Activated CD8-positive, alpha-beta memory T cell treated with anti-CD3 and anti-CD28 coated beads, Interleukin-2, amount 10 ng/mL, durations not matched to agents 7 days and 5 days (primary cell): ENCODE measurements at regions of chr6 and their contacts with region 1.

Region 1: GRCh38 chr6:33744001-33744848 is 2.5 kb downstream of the IP6K3 start:
- DNase-seq: peak; percentile 80
- ATAC-seq: peak; percentile 78
- H3K4me3 Mint-ChIP-seq: no peak overlapping the region
- H3K27ac Mint-ChIP-seq: no peak overlapping the region
- H3K4me1 Mint-ChIP-seq: no peaks in the 10 kb centered on the region
- H3K27me3 Mint-ChIP-seq: peaks cover 18% of the 10 kb centered on the region

Region 2: GRCh38 chr6:33652002-33652401 is 92.2 kb before region 1 on chr6:
- CTCF ChIA-PET with region 1: no interaction called
- DNase-seq: no peak
- ATAC-seq: no peak
- H3K4me3 Mint-ChIP-seq: no peak overlapping the region
- H3K27ac Mint-ChIP-seq: no peak overlapping the region
- H3K4me1 Mint-ChIP-seq: peaks cover 15% of the 10 kb centered on the region
- H3K27me3 Mint-ChIP-seq: no peaks in the 10 kb centered on the region

Region 3: DNA sequence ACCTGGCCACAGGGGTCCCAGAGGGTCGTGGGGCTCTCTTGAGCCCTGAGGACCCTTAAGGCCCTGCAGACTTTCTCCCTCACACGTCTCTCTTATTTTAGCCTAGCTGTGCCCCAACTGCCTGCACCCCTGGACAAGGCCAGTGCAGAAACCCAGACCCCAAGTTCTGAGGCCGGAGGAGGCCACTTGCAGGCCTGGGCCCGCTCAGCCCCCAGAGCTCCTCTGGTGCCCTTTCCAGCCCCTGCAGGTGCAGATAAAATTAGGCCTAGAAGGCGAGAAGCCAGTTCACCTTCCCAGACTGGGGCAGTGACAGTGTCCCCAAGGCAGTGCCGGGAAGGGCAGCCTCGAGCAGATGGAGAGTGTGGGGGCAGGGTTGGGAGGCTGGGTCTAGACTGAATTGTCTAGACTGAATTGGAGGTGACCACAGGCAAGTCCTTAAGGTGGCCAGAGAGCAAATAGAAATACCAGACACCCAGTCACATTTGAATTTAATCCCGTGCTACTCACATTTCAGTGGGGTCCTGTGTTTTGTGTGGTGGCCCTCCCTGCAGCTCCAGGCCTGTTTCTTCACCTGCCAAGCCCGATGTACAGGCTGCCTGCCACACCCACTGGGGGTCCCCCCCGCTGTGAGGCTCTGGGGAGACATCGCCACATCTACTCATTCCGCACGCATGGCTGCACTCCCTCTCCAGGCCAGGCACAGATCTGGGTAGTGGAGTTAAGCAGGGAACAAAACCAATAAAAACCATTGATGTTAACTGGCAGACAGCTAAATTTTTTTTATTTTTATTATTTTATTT is 11.0 kb after region 1 on chr6:
- CTCF ChIA-PET with region 1: interaction called, 28 read pairs
- DNase-seq: no peak
- ATAC-seq: no peak
- H3K4me3 Mint-ChIP-seq: no peak overlapping the region
- H3K27ac Mint-ChIP-seq: no peak overlapping the region
- H3K4me1 Mint-ChIP-seq: no peaks in the 10 kb centered on the region
- H3K27me3 Mint-ChIP-seq: peaks cover 5% of the 10 kb centered on the region

Region 4: GRCh38 chr6:33761922-33762629 is 17.9 kb after region 1 on chr6:
- CTCF ChIA-PET with region 1: interaction called, 28 read pairs
- DNase-seq: peak; percentile 70
- ATAC-seq: peak; percentile 71
- H3K4me3 Mint-ChIP-seq: no peak overlapping the region
- H3K27ac Mint-ChIP-seq: no peak overlapping the region
- H3K4me1 Mint-ChIP-seq: peaks cover 5% of the 10 kb centered on the region
- H3K27me3 Mint-ChIP-seq: peaks cover 2% of the 10 kb centered on the region